ENCODE measurements at regions of chr1 and their contacts with region 1.

Region 1: GRCh38 chr1:110209715-110210603 is at the start of gene KCNC4:
- DNase-seq: peak; percentile 91 to 95 (median 94)
- H3K4me3 ChIP-seq: peak within 1 kb of the TSS; percentile 36 to 68
- H3K4me3 Mint-ChIP-seq: peak within 1 kb of the TSS; percentile 87 to 95 (median 89)
- H3K27ac ChIP-seq: peak within 1 kb of the TSS; percentile 81
- H3K27ac Mint-ChIP-seq: peak within 1 kb of the TSS; percentile 89 to 98 (median 97)
- H3K4me1 ChIP-seq: peaks cover 44% of the 10 kb centered on the region
- H3K4me1 Mint-ChIP-seq: peaks cover 32 to 64% (median 45%) of the 10 kb centered on the region in 4 donors
- H3K27me3 ChIP-seq: no peaks in the 10 kb centered on the region
- H3K27me3 Mint-ChIP-seq: no peaks in the 10 kb centered on the region
- total RNA-seq, gene KCNC4: 11.9 to 13.4 TPM

Region 2: GRCh38 chr1:110170766-110171733 is 38.9 kb before region 1 on chr1:
- CTCF ChIA-PET with region 1: no interaction called
- POLR2A ChIA-PET with region 1: no interaction called
- intact Hi-C with region 1: no loop called
- DNase-seq: no peak
- H3K4me3 ChIP-seq: no peak overlapping the region
- H3K4me3 Mint-ChIP-seq: no peak overlapping the region
- H3K27ac ChIP-seq: no peak overlapping the region
- H3K27ac Mint-ChIP-seq: no peak overlapping the region
- H3K4me1 ChIP-seq: no peaks in the 10 kb centered on the region
- H3K4me1 Mint-ChIP-seq: no peaks in the 10 kb centered on the region
- H3K27me3 ChIP-seq: no peaks in the 10 kb centered on the region
- H3K27me3 Mint-ChIP-seq: peaks cover 0 to 19% of the 10 kb centered on the region in 2 donors

Region 3: DNA sequence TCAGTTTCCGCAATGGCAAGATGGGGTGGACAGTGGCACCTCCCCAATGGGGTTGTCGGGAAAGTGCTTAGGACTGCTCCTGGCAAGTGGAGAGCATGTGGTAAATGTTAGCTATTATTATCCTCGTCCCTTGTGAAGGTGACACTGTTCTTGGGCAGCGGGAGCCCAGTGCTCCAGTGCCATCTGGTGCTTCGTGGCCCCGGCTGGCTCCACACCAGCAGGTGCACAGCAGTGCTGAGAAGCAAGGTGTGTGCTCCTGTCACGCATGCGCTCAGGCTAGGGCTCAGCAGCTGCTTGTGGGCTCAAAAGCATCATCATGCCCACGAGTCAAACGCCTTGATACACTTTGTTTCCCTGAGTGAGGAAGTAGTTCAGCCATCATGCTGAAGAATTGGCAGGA is 24.8 kb before region 1 on chr1:
- CTCF ChIA-PET with region 1: no interaction called
- POLR2A ChIA-PET with region 1: no interaction called
- intact Hi-C with region 1: no loop called
- DNase-seq: no peak
- H3K4me3 ChIP-seq: no peak overlapping the region
- H3K4me3 Mint-ChIP-seq: no peak overlapping the region
- H3K27ac ChIP-seq: no peak overlapping the region
- H3K27ac Mint-ChIP-seq: no peak overlapping the region
- H3K4me1 ChIP-seq: no peaks in the 10 kb centered on the region
- H3K4me1 Mint-ChIP-seq: no peaks in the 10 kb centered on the region
- H3K27me3 ChIP-seq: no peaks in the 10 kb centered on the region
- H3K27me3 Mint-ChIP-seq: peaks cover 11 to 16% of the 10 kb centered on the region in 2 donors

Region 4: GRCh38 chr1:110224240-110224995 is 14.5 kb after region 1 on chr1:
- CTCF ChIA-PET with region 1: interaction called, 12 read pairs
- POLR2A ChIA-PET with region 1: interaction called, 4 read pairs
- intact Hi-C with region 1: no loop called
- DNase-seq: no peak
- H3K4me3 ChIP-seq: no peak overlapping the region
- H3K4me3 Mint-ChIP-seq: no peak overlapping the region
- H3K27ac ChIP-seq: no peak overlapping the region
- H3K27ac Mint-ChIP-seq: no peak overlapping the region
- H3K4me1 ChIP-seq: no peaks in the 10 kb centered on the region
- H3K4me1 Mint-ChIP-seq: peaks cover 0 to 1% (median 0%) of the 10 kb centered on the region in 4 donors
- H3K27me3 ChIP-seq: no peaks in the 10 kb centered on the region
- H3K27me3 Mint-ChIP-seq: no peaks in the 10 kb centered on the region

Region 5: DNA sequence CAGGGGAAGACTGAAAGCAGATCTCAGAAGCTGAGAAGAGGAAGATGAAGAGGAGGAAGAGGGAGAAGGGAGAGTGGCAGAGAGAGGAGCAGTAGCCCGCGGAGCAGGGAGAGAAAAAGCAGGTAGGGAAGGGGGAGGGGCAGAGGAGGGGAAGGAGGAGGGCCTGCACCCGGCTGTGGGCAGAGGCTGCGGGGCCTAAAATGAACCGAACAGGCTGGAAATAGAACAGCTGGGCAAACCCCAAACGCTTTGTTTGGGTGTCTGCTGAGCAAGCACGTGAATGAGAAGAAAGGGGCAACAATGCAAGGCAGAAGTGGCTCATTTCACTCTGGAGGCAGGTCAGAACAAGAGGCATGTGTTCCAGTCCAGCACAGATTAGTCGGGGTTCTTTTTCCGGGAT is 33.6 kb after region 1 on chr1:
- CTCF ChIA-PET with region 1: interaction called, 16 read pairs
- POLR2A ChIA-PET with region 1: no interaction called
- intact Hi-C with region 1: no loop called
- DNase-seq: no peak
- H3K4me3 ChIP-seq: no peak overlapping the region
- H3K4me3 Mint-ChIP-seq: no peak overlapping the region
- H3K27ac ChIP-seq: no peak overlapping the region
- H3K27ac Mint-ChIP-seq: no peak overlapping the region
- H3K4me1 ChIP-seq: no peaks in the 10 kb centered on the region
- H3K4me1 Mint-ChIP-seq: peaks cover 0 to 3% (median 0%) of the 10 kb centered on the region in 4 donors
- H3K27me3 ChIP-seq: no peaks in the 10 kb centered on the region
- H3K27me3 Mint-ChIP-seq: no peaks in the 10 kb centered on the region

Region 6: GRCh38 chr1:110407260-110408210 is 197.6 kb after region 1 on chr1 and contains the start of gene LAMTOR5:
- CTCF ChIA-PET with region 1: interaction called, 45 read pairs
- POLR2A ChIA-PET with region 1: interaction called, 13 read pairs
- intact Hi-C with region 1: no loop called
- DNase-seq: peak; percentile 89 to 91 (median 90)
- H3K4me3 ChIP-seq: peak within 1 kb of the TSS; percentile 83 to 98
- H3K4me3 Mint-ChIP-seq: peak within 1 kb of the TSS; percentile 96 to 100 (median 99)
- H3K27ac ChIP-seq: peak within 1 kb of the TSS; percentile 87
- H3K27ac Mint-ChIP-seq: peak within 1 kb of the TSS; percentile 95 to 100 (median 99)
- H3K4me1 ChIP-seq: peaks cover 28% of the 10 kb centered on the region
- H3K4me1 Mint-ChIP-seq: peaks cover 17 to 34% (median 24%) of the 10 kb centered on the region in 4 donors
- H3K27me3 ChIP-seq: no peaks in the 10 kb centered on the region
- H3K27me3 Mint-ChIP-seq: no peaks in the 10 kb centered on the region
- total RNA-seq, gene LAMTOR5: 64.5 to 69.6 TPM